A673 (cell line): ENCODE measurements at regions of chr13 and their contacts with region 1.

Region 1: DNA sequence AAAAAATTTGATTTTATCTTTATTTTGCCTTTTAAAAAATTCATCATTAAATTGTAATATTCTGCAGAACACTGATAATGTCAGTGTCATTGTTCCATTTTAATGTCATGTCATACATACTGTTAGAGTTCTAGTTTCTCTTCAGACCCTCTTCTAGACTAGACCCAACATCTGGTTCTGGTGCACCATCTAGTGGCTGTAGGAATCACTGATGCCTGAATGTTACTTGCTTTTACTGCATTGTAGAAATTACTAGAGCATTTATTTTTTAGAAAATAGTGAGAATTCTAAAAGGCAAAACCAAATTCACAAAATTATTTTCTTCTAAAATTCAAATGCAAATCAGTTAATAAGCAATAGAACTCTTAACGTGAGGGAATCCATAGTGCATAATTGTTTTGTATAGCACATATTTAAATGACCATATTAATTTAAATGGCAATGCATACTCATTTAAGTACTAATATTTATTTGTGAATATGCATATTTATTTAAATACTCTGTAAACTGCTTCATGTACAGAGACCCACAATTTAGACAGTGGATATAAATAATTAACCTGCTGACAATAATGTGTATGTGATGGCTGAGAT is 425.7 kb downstream of the KLF12 start:
- DNase-seq: peak; percentile 83
- H3K4me3 ChIP-seq: no peak overlapping the region
- H3K27ac ChIP-seq: no peak overlapping the region
- H3K4me1 ChIP-seq: peaks cover 5% of the 10 kb centered on the region
- H3K27me3 ChIP-seq: no peaks in the 10 kb centered on the region
- CTCF ChIP-seq: peak; percentile 95

Region 2: GRCh38 chr13:72643311-72643989 is 1065.0 kb before region 1 on chr13:
- CTCF ChIA-PET with region 1: no interaction called
- POLR2A ChIA-PET with region 1: no interaction called
- intact Hi-C with region 1: loop called (anchors 10 kb)
- DNase-seq: peak; percentile 54
- H3K4me3 ChIP-seq: no peak overlapping the region
- H3K27ac ChIP-seq: no peak overlapping the region
- H3K4me1 ChIP-seq: no peaks in the 10 kb centered on the region
- H3K27me3 ChIP-seq: peaks cover 52% of the 10 kb centered on the region
- CTCF ChIP-seq: peak; percentile 85

Region 3: GRCh38 chr13:72808917-72809500 is 899.5 kb before region 1 on chr13:
- CTCF ChIA-PET with region 1: no interaction called
- POLR2A ChIA-PET with region 1: no interaction called
- intact Hi-C with region 1: loop called (anchors 2 kb)
- DNase-seq: peak; percentile 42
- H3K4me3 ChIP-seq: no peak overlapping the region
- H3K27ac ChIP-seq: no peak overlapping the region
- H3K4me1 ChIP-seq: no peaks in the 10 kb centered on the region
- H3K27me3 ChIP-seq: no peaks in the 10 kb centered on the region
- CTCF ChIP-seq: peak; percentile 73

Region 4: DNA sequence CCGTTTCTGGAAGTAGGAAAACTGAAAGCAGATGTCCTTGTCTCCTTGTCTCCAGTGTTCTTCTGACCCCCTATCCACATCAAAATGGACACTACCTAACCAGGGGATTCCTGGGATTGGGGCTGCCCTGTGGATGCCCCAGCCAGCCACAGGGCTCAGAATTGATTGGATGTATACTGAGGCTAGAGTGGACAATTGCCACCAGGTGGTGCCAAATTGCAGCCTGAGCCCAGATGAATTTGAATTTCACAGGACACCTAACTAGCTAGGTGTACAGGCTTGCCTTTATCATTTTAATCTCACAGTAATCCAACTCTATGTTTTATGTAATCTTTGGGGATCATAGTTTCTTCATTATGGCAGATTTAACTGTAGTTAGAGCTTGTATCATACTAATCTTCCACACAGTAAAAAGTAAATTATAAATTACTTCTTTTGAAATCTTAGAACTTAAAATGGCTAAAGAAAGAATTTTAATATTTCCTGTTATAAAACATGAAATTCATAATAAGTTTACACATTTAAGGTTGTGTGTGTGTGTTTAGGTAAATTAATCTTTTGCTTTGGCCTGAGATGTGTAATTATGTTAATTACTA is 868.6 kb before region 1 on chr13:
- CTCF ChIA-PET with region 1: no interaction called
- POLR2A ChIA-PET with region 1: no interaction called
- intact Hi-C with region 1: loop called (anchors 1 kb)
- DNase-seq: peak; percentile 43
- H3K4me3 ChIP-seq: no peak overlapping the region
- H3K27ac ChIP-seq: no peak overlapping the region
- H3K4me1 ChIP-seq: no peaks in the 10 kb centered on the region
- H3K27me3 ChIP-seq: no peaks in the 10 kb centered on the region
- CTCF ChIP-seq: peak; percentile 65

Region 5: GRCh38 chr13:73341748-73342147 is 366.7 kb before region 1 on chr13:
- CTCF ChIA-PET with region 1: no interaction called
- POLR2A ChIA-PET with region 1: no interaction called
- intact Hi-C with region 1: loop called (anchors 10 kb)
- DNase-seq: peak; percentile 40
- H3K4me3 ChIP-seq: no peak overlapping the region
- H3K27ac ChIP-seq: no peak overlapping the region
- H3K4me1 ChIP-seq: no peaks in the 10 kb centered on the region
- H3K27me3 ChIP-seq: no peaks in the 10 kb centered on the region
- CTCF ChIP-seq: no peak

Region 6: DNA sequence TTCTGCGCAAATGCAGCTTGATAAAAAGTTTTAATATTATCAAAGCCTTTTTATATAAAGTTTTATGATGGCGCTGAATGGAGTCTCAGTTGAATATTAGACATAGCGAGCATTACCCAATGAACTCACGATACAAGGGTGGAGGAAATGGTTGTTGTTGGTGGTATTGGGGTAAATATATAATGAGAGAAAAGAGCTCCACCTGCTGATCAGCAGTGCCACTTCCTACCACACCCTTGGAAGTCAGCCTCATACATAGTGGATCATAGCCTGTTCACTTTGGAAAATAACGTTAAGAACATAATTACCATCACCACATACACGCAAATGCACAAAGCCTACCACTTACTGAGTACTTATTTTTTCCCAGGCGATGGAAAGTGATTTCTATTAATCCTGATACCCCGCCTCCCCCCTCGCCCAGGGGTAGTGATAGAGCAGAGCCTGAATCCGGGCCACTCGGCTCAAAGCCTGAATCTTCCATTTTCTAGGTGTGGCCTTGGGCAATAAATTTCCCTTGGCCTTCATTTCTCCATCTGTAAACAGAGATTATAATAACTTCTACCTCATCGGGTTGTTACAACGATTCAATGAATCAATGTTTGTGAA is 291.4 kb before region 1 on chr13:
- CTCF ChIA-PET with region 1: no interaction called
- POLR2A ChIA-PET with region 1: no interaction called
- intact Hi-C with region 1: loop called (anchors 10 kb)
- DNase-seq: peak; percentile 48
- H3K4me3 ChIP-seq: no peak overlapping the region
- H3K27ac ChIP-seq: no peak overlapping the region
- H3K4me1 ChIP-seq: no peaks in the 10 kb centered on the region
- H3K27me3 ChIP-seq: no peaks in the 10 kb centered on the region
- CTCF ChIP-seq: peak; percentile 57